ENCODE measurements at regions of chr11 and their contacts with region 1.

Region 1: GRCh38 chr11:44760917-44761550 is 34.3 kb downstream of the TSPAN18 start:
- DNase-seq: peak; percentile 92
- H3K4me3 ChIP-seq: no peak overlapping the region
- H3K27ac ChIP-seq: peak overlapping the region; percentile 21
- H3K4me1 ChIP-seq: peaks cover 33% of the 10 kb centered on the region
- H3K27me3 ChIP-seq: no peaks in the 10 kb centered on the region
- CTCF ChIP-seq: peak in 1 of 2 donors; percentile 21
- POLR2A ChIP-seq: no peak

Region 2: GRCh38 chr11:44740967-44741366 is 20.1 kb before region 1 on chr11:
- CTCF ChIA-PET with region 1: interaction called, 10 read pairs
- POLR2A ChIA-PET with region 1: no interaction called
- dilution Hi-C with region 1: no loop called
- intact Hi-C with region 1: no loop called
- DNase-seq: peak; percentile 23
- H3K4me3 ChIP-seq: no peak overlapping the region
- H3K27ac ChIP-seq: no peak overlapping the region
- H3K4me1 ChIP-seq: peaks cover 3% of the 10 kb centered on the region
- H3K27me3 ChIP-seq: no peaks in the 10 kb centered on the region
- CTCF ChIP-seq: no peak
- POLR2A ChIP-seq: no peak

Region 3: GRCh38 chr11:45147017-45147728 is 386.1 kb after region 1 on chr11:
- CTCF ChIA-PET with region 1: no interaction called
- POLR2A ChIA-PET with region 1: no interaction called
- dilution Hi-C with region 1: no loop called
- intact Hi-C with region 1: loop called (anchors 5 kb)
- DNase-seq: peak; percentile 94
- H3K4me3 ChIP-seq: peak overlapping the region; percentile 41 to 86 (median 59)
- H3K27ac ChIP-seq: peak overlapping the region; percentile 47
- H3K4me1 ChIP-seq: peaks cover 17% of the 10 kb centered on the region
- H3K27me3 ChIP-seq: peaks cover 10 to 31% of the 10 kb centered on the region in 2 experiments
- CTCF ChIP-seq: no peak
- POLR2A ChIP-seq: no peak

Measured in endothelial cell of umbilical vein (primary cell).